ENCODE measurements at regions of chr1 and their contacts with region 1.

Region 1: GRCh38 chr1:200488375-200489165 is 78.7 kb upstream of the ZNF281 start:
- DNase-seq: peak; percentile 97
- ATAC-seq: peak; percentile 82
- H3K4me3 ChIP-seq: peak overlapping the region; percentile 20; the same call in 1 of the 2 replicates
- H3K27ac ChIP-seq: peak overlapping the region; percentile 18; the same call in 1 of the 2 replicates
- H3K4me1 ChIP-seq: peaks cover 17% of the 10 kb centered on the region
- H3K27me3 ChIP-seq: no peaks in the 10 kb centered on the region
- CTCF ChIP-seq: peak; percentile 99

Region 2: DNA sequence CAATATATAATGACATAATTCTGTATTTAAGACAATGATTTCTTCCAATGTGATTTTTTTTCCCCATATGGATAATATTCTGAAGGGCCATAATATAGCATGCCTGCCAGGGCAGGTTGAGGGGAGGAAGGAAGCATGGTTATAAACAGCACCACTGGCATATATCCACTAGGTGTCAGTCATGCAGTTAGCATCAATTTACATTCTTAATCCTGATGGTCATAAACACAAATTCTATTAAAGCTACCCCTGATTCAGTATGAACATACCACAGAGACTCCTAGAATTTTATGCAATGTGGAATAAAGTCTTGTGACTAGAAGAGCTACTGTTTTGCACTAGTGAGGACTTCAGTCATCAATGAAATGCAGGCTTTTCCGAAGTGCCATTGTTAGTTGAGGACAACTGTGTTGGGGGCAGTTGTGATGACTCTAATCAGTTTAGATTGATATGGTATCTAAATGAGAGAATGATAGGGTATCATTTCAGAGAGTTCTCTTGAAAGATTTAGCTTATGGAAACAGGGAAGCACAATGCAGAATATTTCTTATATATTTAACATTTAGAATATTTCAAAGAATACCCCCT is 803.8 kb before region 1 on chr1:
- CTCF ChIA-PET with region 1: no interaction called
- POLR2A ChIA-PET with region 1: no interaction called
- intact Hi-C with region 1: loop called (anchors 1 kb)
- DNase-seq: peak; percentile 80
- ATAC-seq: peak; percentile 84
- H3K4me3 ChIP-seq: no peak overlapping the region
- H3K27ac ChIP-seq: no peak overlapping the region
- H3K4me1 ChIP-seq: peaks cover 13% of the 10 kb centered on the region
- H3K27me3 ChIP-seq: no peaks in the 10 kb centered on the region
- CTCF ChIP-seq: peak; percentile 79

Region 3: DNA sequence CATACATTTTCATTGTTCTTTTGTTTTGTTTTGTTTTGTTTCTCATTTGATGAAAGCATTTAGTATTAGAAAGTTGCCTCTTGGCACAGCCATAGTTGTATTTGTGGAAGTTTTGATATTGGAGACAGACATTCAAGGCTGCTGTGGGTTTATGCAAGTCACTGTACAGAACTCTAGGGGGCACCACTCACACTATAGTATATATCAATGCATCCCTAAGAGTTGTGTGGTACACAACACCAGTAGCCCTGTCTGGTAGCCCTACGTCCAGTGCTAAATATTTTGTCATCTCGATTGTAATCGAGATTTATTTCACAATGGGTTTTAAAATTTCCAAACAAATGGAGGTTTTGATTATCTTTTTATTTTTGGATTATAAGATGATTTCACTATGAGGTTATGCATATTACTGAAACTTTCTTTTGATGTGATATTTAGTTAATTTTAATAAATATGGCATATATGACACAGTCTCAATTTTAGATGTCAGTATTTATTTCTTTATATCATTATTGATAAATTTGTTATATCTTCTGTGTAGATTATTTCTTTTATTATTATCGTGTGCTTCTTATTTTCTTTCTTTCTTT is 348.8 kb before region 1 on chr1:
- CTCF ChIA-PET with region 1: interaction called, 3 read pairs
- POLR2A ChIA-PET with region 1: no interaction called
- intact Hi-C with region 1: loop called (anchors 1 kb)
- DNase-seq: peak; percentile 93
- ATAC-seq: peak; percentile 100
- H3K4me3 ChIP-seq: no peak overlapping the region
- H3K27ac ChIP-seq: no peak overlapping the region
- H3K4me1 ChIP-seq: no peaks in the 10 kb centered on the region
- H3K27me3 ChIP-seq: no peaks in the 10 kb centered on the region
- CTCF ChIP-seq: peak; percentile 100

Region 4: GRCh38 chr1:200302192-200302920 is 186.2 kb before region 1 on chr1:
- CTCF ChIA-PET with region 1: interaction called, 3 read pairs
- POLR2A ChIA-PET with region 1: interaction called, 4 read pairs
- intact Hi-C with region 1: loop called (anchors 1 kb)
- DNase-seq: peak; percentile 67
- ATAC-seq: peak; percentile 71
- H3K4me3 ChIP-seq: peak overlapping the region; percentile 74
- H3K27ac ChIP-seq: no peak overlapping the region
- H3K4me1 ChIP-seq: peaks cover 8% of the 10 kb centered on the region
- H3K27me3 ChIP-seq: no peaks in the 10 kb centered on the region
- CTCF ChIP-seq: peak; percentile 61; the same call in 1 of the 2 replicates

Region 5: GRCh38 chr1:200379431-200379755 is 109.2 kb before region 1 on chr1:
- CTCF ChIA-PET with region 1: interaction called, 5 read pairs
- POLR2A ChIA-PET with region 1: interaction called, 29 read pairs
- intact Hi-C with region 1: loop called (anchors 1 kb)
- DNase-seq: peak; percentile 99
- ATAC-seq: peak; percentile 87
- H3K4me3 ChIP-seq: peak overlapping the region; percentile 32; the same call in 1 of the 2 replicates
- H3K27ac ChIP-seq: peak overlapping the region; percentile 73
- H3K4me1 ChIP-seq: peaks cover 51% of the 10 kb centered on the region
- H3K27me3 ChIP-seq: no peaks in the 10 kb centered on the region
- CTCF ChIP-seq: no peak

Region 6: GRCh38 chr1:200415693-200416593 is 72.6 kb before region 1 on chr1:
- CTCF ChIA-PET with region 1: interaction called, 7 read pairs
- POLR2A ChIA-PET with region 1: no interaction called
- intact Hi-C with region 1: loop called (anchors 1 kb)
- DNase-seq: peak; percentile 100
- ATAC-seq: peak; percentile 94
- H3K4me3 ChIP-seq: peak overlapping the region; percentile 51
- H3K27ac ChIP-seq: peak overlapping the region; percentile 92
- H3K4me1 ChIP-seq: peaks cover 36% of the 10 kb centered on the region
- H3K27me3 ChIP-seq: no peaks in the 10 kb centered on the region
- CTCF ChIP-seq: no peak

Region 7: GRCh38 chr1:200510228-200510623 is 21.7 kb after region 1 on chr1:
- CTCF ChIA-PET with region 1: interaction called, 14 read pairs
- POLR2A ChIA-PET with region 1: no interaction called
- intact Hi-C with region 1: loop called (anchors 1 kb)
- DNase-seq: peak; percentile 99
- ATAC-seq: peak; percentile 82
- H3K4me3 ChIP-seq: peak overlapping the region; percentile 55; the same call in 1 of the 2 replicates
- H3K27ac ChIP-seq: no peak overlapping the region
- H3K4me1 ChIP-seq: peaks cover 16% of the 10 kb centered on the region
- H3K27me3 ChIP-seq: no peaks in the 10 kb centered on the region
- CTCF ChIP-seq: peak; percentile 100

Measured in PC-3 (cell line).